Heart right ventricle (tissue), 16 donors: ENCODE measurements at regions of chr7 and their contacts with region 1.

Region 1: DNA sequence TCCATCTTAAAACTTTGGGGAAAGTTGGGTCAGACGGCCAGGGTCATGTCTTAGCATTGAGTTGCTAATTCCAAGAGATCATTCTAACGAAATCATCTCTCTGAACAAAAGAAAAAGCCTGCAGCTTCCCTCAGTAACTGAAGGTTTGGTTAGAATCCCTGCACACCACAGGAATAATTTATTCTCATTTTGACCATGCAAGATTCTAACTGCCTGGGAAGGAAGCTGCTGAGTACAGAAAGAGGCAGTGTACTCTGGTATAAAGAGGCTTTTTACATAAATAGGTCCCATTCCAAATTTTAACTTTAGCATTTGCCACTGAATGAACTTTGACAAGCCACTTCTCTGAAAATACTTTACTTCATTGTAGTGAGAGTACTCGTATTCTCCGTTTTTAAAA is 76.9 kb upstream of the RSBN1L start:
- DNase-seq: no peak
- ATAC-seq: no peak
- H3K4me3 ChIP-seq: no peak overlapping the region
- H3K27ac ChIP-seq: no peak overlapping the region
- H3K4me1 ChIP-seq: peaks cover 0 to 9% (median 0%) of the 10 kb centered on the region in 9 donors
- H3K27me3 ChIP-seq: no peaks in the 10 kb centered on the region
- CTCF ChIP-seq: no peak

Region 2: DNA sequence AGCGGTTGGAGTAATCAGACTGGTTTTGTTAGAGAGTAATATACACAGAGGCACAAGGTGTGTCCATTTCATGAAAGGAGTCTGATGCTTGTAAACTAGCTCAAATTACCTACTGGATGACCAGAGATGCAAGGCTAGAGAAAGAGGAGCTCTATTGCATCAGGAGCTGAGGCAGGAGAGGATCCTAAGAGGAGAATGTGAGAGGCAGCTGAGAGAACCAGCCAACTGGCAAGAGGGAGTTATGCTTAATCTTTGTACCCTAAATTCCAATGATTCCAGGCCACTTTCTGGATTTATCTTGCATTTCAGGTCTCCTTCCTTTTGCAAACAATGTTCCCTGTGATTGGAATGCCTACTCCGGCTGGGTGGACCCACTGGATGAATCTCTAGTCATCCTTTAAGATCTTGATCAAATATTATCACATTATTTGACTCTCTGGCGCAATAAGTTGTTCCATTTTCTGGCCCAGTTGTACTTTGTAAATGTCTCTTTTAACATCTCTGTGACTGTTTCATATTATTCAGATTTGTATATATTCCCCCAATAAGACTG is 139.7 kb before region 1 on chr7:
- intact Hi-C with region 1: loop called in 1 of 10 experiments (anchors 10 kb)
- DNase-seq: no peak
- ATAC-seq: no peak
- H3K4me3 ChIP-seq: no peak overlapping the region
- H3K27ac ChIP-seq: no peak overlapping the region
- H3K4me1 ChIP-seq: peaks cover 0 to 16% (median 0%) of the 10 kb centered on the region in 9 donors
- H3K27me3 ChIP-seq: no peaks in the 10 kb centered on the region
- CTCF ChIP-seq: no peak

Region 3: DNA sequence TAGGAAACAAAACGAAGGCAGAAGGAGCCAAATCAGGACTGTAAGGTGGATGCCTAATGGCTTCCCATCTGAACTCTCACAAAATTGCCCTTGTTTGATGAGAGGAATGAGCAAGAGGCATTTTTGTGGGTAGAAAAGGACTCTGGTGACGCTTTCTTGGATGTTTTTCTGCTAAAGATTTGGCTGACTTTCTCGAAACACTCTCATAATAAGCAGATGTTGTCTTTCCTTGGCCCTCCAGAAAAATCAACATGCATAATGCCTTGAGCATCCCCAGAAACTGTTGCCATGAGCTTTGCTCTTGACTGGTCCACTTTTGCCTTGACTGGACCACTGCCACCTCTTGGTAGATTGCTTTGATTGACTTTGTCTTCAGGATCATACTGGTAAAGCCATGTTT is 68.7 kb before region 1 on chr7:
- intact Hi-C with region 1: loop called in 1 of 10 experiments (anchors 10 kb)
- DNase-seq: no peak
- ATAC-seq: no peak
- H3K4me3 ChIP-seq: no peak overlapping the region
- H3K27ac ChIP-seq: no peak overlapping the region
- H3K4me1 ChIP-seq: peaks cover 7 to 92% (median 63%) of the 10 kb centered on the region in 9 donors
- H3K27me3 ChIP-seq: no peaks in the 10 kb centered on the region
- CTCF ChIP-seq: no peak